ENCODE measurements at regions of chr5 and their contacts with region 1.

Region 1: GRCh38 chr5:132293066-132293991 is 865 bp upstream of the SLC22A4 start:
- DNase-seq: peak; percentile 91
- H3K4me3 Mint-ChIP-seq: peak overlapping the region; percentile 98
- H3K27ac Mint-ChIP-seq: peak overlapping the region; percentile 89
- H3K4me1 Mint-ChIP-seq: peaks cover 40% of the 10 kb centered on the region
- H3K27me3 Mint-ChIP-seq: no peaks in the 10 kb centered on the region
- CTCF ChIP-seq: peak; percentile 19

Region 2: DNA sequence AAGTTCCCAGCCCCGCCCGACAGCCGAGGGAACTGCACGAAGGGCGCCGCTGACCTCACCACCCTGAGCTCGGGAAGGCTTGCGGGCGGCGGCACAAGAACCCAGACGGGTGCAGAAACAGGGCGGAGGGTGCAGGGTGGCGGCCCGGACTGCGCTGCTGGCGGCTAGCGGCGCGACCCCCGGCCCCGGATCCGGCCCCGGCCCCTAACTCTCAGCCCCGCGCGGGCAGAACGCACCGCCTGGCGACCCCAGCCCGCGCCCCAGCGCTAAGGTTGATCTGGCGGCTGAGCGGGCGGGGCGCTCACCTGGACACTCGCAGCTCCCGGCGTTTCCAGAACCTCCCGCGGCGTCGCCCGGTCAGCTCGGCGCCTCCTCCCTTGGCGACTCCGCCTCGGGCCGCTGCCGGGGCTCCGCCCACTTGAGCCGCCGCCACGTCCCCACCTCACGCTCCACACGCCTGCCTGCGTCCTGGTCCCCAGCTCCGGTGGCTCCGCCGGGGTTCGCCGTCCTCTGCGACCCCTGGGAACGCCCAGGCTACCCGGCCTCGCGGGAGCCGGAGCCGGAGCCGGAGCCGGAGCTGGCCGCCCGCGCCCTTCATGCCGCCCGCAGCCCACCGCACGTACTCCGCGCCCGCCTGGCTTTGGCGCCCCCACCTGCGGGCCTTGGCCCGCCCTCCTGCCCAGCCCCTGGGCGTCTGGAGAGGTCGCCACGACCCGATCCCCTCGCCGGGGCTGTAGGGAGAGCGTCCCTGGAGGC is 65.7 kb before region 1 on chr5 and contains the start of gene P4HA2:
- CTCF ChIA-PET with region 1: interaction called, 3 read pairs
- POLR2A ChIA-PET with region 1: interaction called, 26 read pairs
- intact Hi-C with region 1: loop called (anchors 1 kb)
- DNase-seq: peak; percentile 86
- H3K4me3 Mint-ChIP-seq: peak within 1 kb of the TSS; percentile 74
- H3K27ac Mint-ChIP-seq: no peak within 1 kb of the TSS
- H3K4me1 Mint-ChIP-seq: peaks cover 32% of the 10 kb centered on the region
- H3K27me3 Mint-ChIP-seq: no peaks in the 10 kb centered on the region
- CTCF ChIP-seq: peak; percentile 21
- total RNA-seq, gene P4HA2: 53.1 and 91.1 TPM in 2 replicates

Region 3: GRCh38 chr5:132260714-132261551 is 32.4 kb before region 1 on chr5:
- CTCF ChIA-PET with region 1: interaction called, 5 read pairs
- POLR2A ChIA-PET with region 1: interaction called, 56 read pairs
- intact Hi-C with region 1: loop called (anchors 2 kb)
- DNase-seq: peak; percentile 97
- H3K4me3 Mint-ChIP-seq: peak overlapping the region; percentile 83
- H3K27ac Mint-ChIP-seq: peak overlapping the region; percentile 74
- H3K4me1 Mint-ChIP-seq: peaks cover 68% of the 10 kb centered on the region
- H3K27me3 Mint-ChIP-seq: no peaks in the 10 kb centered on the region
- CTCF ChIP-seq: no peak

Region 4: DNA sequence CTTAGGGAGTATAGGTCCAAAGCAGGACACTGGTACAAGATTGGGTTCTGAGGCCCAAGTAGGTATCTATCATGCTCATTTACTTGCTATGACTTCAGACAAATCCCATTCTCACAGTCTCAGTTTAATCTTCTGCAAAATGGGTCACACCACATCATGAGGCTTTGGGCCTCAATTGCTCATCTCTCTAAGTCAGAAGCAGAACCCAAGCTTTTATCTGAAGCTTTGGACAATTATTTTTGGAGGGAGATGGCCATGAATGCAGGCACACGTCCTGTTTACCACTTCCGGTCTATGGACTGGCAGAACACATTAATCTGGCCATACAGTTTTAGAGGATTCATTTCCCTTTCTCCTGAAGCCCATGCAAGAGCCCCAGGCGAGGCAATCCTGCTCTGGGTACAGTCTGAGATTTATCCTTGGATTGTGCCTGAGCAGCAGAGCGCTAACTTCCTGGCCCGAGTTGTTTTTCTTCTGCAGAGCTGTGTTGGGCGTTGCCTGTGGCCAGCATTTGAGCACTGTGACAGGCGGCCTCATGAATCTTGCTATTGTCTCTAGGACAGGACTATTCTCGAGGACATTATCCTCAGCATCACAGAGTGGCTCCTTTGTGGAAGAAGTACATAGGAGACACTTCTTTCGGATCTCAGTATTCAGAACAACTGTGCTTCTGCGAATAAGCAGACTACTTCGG is 17.0 kb after region 1 on chr5:
- CTCF ChIA-PET with region 1: interaction called, 6 read pairs
- POLR2A ChIA-PET with region 1: interaction called, 16 read pairs
- intact Hi-C with region 1: no loop called
- DNase-seq: no peak
- H3K4me3 Mint-ChIP-seq: no peak overlapping the region
- H3K27ac Mint-ChIP-seq: no peak overlapping the region
- H3K4me1 Mint-ChIP-seq: peaks cover 17% of the 10 kb centered on the region
- H3K27me3 Mint-ChIP-seq: no peaks in the 10 kb centered on the region
- CTCF ChIP-seq: no peak

Region 5: DNA sequence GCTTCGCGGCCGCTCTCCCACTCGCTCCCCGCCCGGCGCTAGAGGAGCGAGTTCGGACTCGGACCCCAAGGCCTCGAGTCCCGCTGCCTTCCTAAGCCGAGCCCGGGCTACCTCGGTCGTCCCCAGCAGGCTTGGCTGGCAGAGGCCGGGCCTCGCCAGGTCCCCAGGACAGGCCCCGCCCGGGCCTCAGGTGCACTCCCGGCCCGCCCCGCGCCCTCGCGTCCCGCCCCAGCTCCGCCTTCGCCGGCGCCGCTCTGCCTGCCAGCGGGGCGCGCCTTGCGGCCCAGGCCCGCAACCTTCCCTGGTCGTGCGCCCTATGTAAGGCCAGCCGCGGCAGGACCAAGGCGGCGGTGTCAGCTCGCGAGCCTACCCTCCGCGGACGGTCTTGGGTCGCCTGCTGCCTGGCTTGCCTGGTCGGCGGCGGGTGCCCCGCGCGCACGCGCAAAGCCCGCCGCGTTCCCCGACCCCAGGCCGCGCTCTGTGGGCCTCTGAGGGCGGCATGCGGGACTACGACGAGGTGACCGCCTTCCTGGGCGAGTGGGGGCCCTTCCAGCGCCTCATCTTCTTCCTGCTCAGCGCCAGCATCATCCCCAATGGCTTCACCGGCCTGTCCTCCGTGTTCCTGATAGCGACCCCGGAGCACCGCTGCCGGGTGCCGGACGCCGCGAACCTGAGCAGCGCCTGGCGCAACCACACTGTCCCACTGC is 76.3 kb after region 1 on chr5 and contains the start of gene SLC22A5:
- CTCF ChIA-PET with region 1: interaction called, 24 read pairs
- POLR2A ChIA-PET with region 1: interaction called, 178 read pairs
- intact Hi-C with region 1: loop called (anchors 1 kb)
- DNase-seq: peak; percentile 84
- H3K4me3 Mint-ChIP-seq: peak within 1 kb of the TSS; percentile 79
- H3K27ac Mint-ChIP-seq: peak within 1 kb of the TSS; percentile 39
- H3K4me1 Mint-ChIP-seq: peaks cover 44% of the 10 kb centered on the region
- H3K27me3 Mint-ChIP-seq: no peaks in the 10 kb centered on the region
- CTCF ChIP-seq: no peak
- total RNA-seq, gene SLC22A5: 122 and 167 TPM in 2 replicates

Region 6: GRCh38 chr5:133489632-133490031 is 1196.3 kb after region 1 on chr5:
- CTCF ChIA-PET with region 1: no interaction called
- POLR2A ChIA-PET with region 1: no interaction called
- intact Hi-C with region 1: no loop called
- DNase-seq: peak; percentile 44
- H3K4me3 Mint-ChIP-seq: no peak overlapping the region
- H3K27ac Mint-ChIP-seq: no peak overlapping the region
- H3K4me1 Mint-ChIP-seq: no peaks in the 10 kb centered on the region
- H3K27me3 Mint-ChIP-seq: peaks cover 19% of the 10 kb centered on the region
- CTCF ChIP-seq: no peak

Measured in MCF 10A (cell line).